Activated CD8-positive, alpha-beta memory T cell treated with anti-CD3 and anti-CD28 coated beads, Interleukin-2, amount 10 ng/mL, durations not matched to agents 7 days and 5 days (primary cell): ENCODE measurements at regions of chr6 and their contacts with region 1.

Region 1: GRCh38 chr6:154156135-154156896 is 117.3 kb downstream of the OPRM1 start:
- DNase-seq: peak; percentile 81
- ATAC-seq: peak; percentile 98
- H3K4me3 Mint-ChIP-seq: peak overlapping the region; percentile 71
- H3K27ac Mint-ChIP-seq: peak overlapping the region; percentile 83
- H3K4me1 Mint-ChIP-seq: peaks cover 26% of the 10 kb centered on the region
- H3K27me3 Mint-ChIP-seq: no peaks in the 10 kb centered on the region

Region 2: DNA sequence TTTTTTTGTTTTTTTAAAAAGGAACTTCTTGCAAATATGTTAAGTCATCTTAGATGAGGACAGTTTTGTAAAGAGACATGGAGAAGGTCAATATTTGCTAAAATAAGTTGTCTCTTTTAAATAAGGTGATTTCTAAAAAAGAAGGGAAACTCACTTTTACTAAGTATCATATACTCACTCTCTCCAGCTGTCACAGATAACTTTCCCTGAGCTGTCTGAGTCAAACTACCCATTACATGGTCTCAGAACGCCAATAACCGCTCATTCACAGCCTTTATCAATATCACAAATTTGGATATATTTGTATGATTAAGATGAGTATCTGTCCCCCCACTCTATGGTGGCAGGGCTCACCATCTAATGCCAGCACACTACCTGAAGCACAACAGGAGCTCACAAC is 152.7 kb after region 1 on chr6:
- CTCF ChIA-PET with region 1: no interaction called
- DNase-seq: no peak
- ATAC-seq: no peak
- H3K4me3 Mint-ChIP-seq: no peak overlapping the region
- H3K27ac Mint-ChIP-seq: no peak overlapping the region
- H3K4me1 Mint-ChIP-seq: no peaks in the 10 kb centered on the region
- H3K27me3 Mint-ChIP-seq: peaks cover 32% of the 10 kb centered on the region

Region 3: DNA sequence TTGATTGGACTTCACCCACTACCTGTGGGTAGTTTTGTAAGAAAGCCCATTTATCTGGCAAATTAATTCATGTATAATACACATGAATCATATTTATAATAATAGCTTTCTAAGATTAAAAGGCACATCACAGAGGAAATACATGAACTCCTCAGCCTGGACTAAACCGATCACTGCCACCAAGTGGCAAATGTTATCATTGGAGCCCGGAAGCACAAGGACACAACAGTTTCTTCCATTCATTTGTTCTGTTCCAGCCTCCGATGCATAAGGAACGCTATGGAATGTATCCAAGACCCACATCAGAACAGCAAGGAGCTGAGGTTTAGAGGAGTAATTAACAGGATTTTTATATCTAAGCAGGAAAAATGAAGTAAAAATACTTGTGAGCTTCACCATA is 214.2 kb after region 1 on chr6:
- CTCF ChIA-PET with region 1: interaction called, 12 read pairs
- DNase-seq: no peak
- ATAC-seq: no peak
- H3K4me3 Mint-ChIP-seq: no peak overlapping the region
- H3K27ac Mint-ChIP-seq: no peak overlapping the region
- H3K4me1 Mint-ChIP-seq: no peaks in the 10 kb centered on the region
- H3K27me3 Mint-ChIP-seq: peaks cover 9% of the 10 kb centered on the region